Aorta (tissue), 5 donors: ENCODE measurements at regions of chr5 and their contacts with region 1.

Region 1: DNA sequence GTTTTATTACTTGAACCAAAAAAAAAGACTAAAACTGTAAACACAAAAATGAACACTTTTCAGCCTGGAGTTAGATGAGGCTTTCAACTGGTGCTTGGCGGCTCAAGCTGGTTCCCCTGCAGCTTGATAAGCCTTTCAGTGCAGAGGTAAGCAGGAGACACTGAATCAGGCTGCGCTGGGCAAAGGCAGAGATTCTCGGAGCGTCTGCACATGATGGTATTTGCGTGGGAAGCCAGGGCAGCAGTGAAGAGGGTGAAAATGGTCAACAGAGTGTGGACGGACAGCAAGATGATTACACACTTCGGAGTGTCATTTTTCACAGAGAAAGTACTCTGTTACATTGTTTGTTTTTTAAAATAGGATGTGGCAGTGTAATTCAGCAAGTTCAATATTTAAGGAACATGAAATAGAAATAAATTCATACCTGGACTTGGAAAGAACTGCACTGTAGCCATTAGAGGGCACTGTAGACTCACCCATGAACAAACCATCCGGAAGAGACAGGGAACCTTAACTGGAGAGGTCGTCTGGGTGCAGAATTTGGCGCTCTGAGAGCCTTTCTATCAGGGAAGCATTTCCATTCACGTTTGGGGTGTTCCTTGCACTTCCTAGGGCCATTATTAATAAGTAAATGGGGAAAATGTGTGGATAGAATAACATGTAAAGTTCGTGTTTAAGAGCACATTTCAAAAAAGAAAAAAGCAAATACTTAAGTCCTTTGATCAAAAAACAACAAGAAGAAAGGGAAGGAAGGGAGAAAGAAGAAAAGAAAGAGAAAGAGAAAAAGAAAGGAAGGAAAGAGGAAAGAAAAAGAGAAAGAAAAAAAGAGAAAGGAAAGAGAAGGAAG is 69.8 kb downstream of the ICE1 start:
- DNase-seq: no peak
- ATAC-seq: no peak
- H3K4me3 ChIP-seq: no peak overlapping the region
- H3K27ac ChIP-seq: no peak overlapping the region
- H3K4me1 ChIP-seq: no peaks in the 10 kb centered on the region
- H3K27me3 ChIP-seq: no peaks in the 10 kb centered on the region

Region 2: DNA sequence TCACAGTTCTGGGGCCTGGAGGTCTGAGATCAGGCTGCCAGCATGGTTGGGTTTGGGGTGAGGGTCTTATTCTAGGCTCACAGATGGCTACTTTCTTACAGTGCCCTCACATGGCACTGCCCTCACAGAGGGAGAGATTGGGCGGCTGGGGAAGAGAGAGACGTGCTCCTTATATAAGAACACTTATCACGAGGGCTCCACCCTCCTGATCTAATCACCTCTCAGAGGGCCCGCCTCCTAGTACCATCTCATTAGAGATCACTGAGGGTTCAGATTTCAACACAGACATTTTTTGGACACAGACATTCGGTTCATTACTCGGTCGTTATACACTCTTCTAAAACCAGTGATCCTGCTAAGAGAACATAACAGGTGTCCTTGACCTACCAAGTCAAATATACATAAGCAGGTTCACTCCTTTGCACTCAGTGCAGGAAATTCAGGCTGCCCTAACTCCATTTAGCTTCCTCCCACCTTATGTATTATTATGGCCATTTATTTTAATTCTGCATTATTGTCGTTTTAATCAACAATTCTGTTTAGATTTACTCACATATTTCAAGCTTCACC is 51.9 kb after region 1 on chr5:
- intact Hi-C with region 1: no loop called
- DNase-seq: no peak
- ATAC-seq: no peak
- H3K4me3 ChIP-seq: no peak overlapping the region
- H3K27ac ChIP-seq: no peak overlapping the region
- H3K4me1 ChIP-seq: no peaks in the 10 kb centered on the region
- H3K27me3 ChIP-seq: no peaks in the 10 kb centered on the region

Region 3: DNA sequence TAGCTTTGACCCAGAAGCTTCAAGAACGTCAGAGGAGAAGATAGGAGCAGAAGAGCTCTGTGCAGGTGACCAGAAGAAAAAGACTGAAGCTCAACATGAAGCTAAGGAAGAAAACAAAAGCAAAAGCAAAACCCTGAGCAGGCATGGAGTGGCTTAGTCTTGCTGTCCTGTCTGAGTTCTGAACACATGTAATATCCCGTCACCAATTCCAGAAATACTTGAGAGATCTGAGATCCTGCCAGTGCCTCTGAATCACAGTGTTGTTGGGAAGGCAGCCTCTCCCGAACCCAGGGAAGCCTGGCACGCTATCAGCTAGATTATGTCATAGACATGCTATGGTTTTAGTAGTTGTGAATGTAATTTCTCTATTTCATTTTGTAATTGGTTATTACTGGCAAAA is 165.9 kb after region 1 on chr5:
- intact Hi-C with region 1: loop called in 1 of 2 experiments (anchors 10 kb)
- DNase-seq: peak; percentile 79 to 80
- ATAC-seq: peak; percentile 89
- H3K4me3 ChIP-seq: peak overlapping the region; percentile 52 to 97
- H3K27ac ChIP-seq: peak overlapping the region in 1 of 2 donors; percentile 86
- H3K4me1 ChIP-seq: no peaks in the 10 kb centered on the region
- H3K27me3 ChIP-seq: no peaks in the 10 kb centered on the region

Region 4: DNA sequence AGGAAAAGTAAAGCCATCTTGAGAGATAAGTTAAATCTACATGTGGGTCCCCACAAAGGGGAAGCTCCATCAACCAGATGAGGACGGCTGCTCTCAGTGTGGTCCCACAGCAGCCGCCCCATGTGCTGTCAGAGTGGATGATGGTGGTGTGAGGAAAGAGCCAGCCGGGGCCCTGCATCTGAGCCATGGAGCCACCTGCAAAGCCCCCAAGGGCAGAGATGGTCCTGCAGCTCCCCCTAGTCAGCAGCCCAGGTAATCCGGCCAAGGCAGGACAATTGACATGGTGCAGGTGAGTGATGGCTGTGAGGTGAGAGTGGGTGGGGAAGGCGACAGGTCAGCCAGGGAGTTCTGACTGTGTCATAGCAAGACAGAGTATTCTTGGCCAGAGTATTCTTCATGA is 389.0 kb after region 1 on chr5:
- intact Hi-C with region 1: loop called (anchors 10 kb)
- DNase-seq: no peak
- ATAC-seq: no peak
- H3K4me3 ChIP-seq: no peak overlapping the region
- H3K27ac ChIP-seq: no peak overlapping the region
- H3K4me1 ChIP-seq: no peaks in the 10 kb centered on the region
- H3K27me3 ChIP-seq: no peaks in the 10 kb centered on the region

Region 5: GRCh38 chr5:5886812-5887486 is 394.6 kb after region 1 on chr5:
- intact Hi-C with region 1: loop called in 1 of 2 experiments (anchors 10 kb)
- DNase-seq: no peak
- ATAC-seq: no peak
- H3K4me3 ChIP-seq: no peak overlapping the region
- H3K27ac ChIP-seq: no peak overlapping the region
- H3K4me1 ChIP-seq: no peaks in the 10 kb centered on the region
- H3K27me3 ChIP-seq: no peaks in the 10 kb centered on the region

Region 6: DNA sequence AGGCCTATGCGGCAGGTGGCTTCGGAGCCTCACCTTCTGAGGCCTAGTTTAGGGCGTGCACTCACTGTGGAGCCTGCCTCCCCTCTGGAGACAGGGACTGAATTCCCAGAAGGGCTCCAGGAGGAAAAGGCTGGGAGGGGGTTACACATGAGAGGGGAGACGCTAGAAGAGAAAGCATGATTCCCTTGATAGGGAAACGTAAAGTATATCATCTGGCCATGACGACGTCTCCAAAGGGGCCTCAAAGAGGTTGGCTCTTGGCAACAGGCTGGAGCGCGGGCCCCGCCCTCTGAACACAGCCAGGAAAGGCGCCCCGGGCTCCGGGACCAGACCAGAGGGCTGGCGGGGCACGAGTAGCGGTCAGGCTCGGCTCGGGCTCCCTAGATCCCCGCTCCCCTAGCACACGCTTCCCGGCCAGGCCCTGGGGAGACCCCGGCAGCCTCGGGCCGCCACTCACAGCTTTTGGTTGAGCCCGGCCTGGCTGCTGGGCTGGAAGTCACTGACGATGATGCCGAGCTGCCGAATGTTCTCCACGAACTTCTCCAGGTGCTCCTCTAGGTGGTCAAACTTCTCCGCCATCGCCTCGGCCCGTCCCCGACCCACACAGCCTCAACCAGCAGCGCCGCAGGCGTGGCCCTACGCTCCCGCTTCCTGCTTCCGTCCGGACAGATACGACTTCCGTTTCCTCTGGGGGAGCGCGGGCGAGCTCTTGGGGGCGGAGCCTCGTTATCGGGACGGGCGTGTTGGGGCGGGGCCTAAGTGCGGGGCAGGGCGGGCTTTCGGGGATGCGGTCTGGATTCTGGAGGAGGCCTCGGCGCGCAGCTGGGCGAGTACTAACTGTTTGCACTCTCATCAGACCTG is 885.8 kb after region 1 on chr5 and contains the start of gene MED10:
- intact Hi-C with region 1: loop called (anchors 5 to 10 kb)
- DNase-seq: peak; percentile 97 to 99
- ATAC-seq: peak; percentile 99
- H3K4me3 ChIP-seq: peak within 1 kb of the TSS; percentile 54 to 90
- H3K27ac ChIP-seq: peak within 1 kb of the TSS; percentile 74 to 86
- H3K4me1 ChIP-seq: peaks cover 1 to 6% of the 10 kb centered on the region in 2 donors
- H3K27me3 ChIP-seq: no peaks in the 10 kb centered on the region
- total RNA-seq, gene MED10: 29.0 to 33.6 TPM

Region 7: GRCh38 chr5:6452622-6453504 is 960.6 kb after region 1 on chr5:
- intact Hi-C with region 1: loop called in 1 of 2 experiments (anchors 5 kb)
- DNase-seq: no peak
- ATAC-seq: no peak
- H3K4me3 ChIP-seq: peak overlapping the region in 1 of 2 donors; percentile 16
- H3K27ac ChIP-seq: peak overlapping the region in 1 of 2 donors; percentile 32
- H3K4me1 ChIP-seq: no peaks in the 10 kb centered on the region
- H3K27me3 ChIP-seq: no peaks in the 10 kb centered on the region

Region 8: DNA sequence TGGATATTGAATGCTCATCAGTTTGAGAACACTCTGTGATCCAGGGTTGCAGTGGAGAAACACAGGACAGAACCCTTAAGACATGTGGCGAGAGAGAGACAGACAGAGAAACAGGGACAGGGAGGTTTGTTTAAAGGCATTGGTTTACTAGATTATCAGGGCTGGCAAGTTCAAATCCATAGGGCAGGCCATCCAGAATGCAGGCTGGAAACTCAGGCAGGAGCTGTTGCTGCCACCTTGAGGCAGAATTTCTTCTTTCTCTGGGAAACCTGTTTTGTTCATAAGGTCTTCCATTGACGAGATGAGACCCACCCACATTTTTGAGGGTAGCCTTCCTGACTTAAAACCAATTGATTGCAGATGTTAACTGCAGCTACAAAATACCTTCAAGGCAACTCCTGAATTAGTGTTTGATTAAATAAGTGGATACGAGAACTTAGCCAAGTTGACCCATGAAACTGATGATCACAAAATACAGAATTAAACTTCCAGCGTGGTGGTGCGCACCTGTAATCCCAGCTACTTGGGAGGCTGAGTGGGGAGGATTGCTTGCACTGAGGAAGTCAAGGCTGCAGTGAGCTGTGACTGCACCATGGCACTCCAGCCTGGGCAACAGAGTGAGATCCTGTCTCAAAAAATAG is 1084.7 kb after region 1 on chr5:
- intact Hi-C with region 1: loop called (anchors 5 kb)
- DNase-seq: no peak
- ATAC-seq: peak; percentile 15
- H3K4me3 ChIP-seq: no peak overlapping the region
- H3K27ac ChIP-seq: no peak overlapping the region
- H3K4me1 ChIP-seq: no peaks in the 10 kb centered on the region
- H3K27me3 ChIP-seq: no peaks in the 10 kb centered on the region